ENCODE measurements at regions of chr7 and their contacts with region 1.

Region 1: GRCh38 chr7:5450549-5451372 is 27.1 kb upstream of the TNRC18 start:
- DNase-seq: peak; percentile 71 to 86 (median 85)
- H3K4me3 ChIP-seq: peak overlapping the region in 2 of 7 experiments; percentile 28 to 37
- H3K27ac ChIP-seq: peak overlapping the region in 1 of 2 experiments; percentile 34
- H3K4me1 ChIP-seq: peaks cover 0 to 60% (median 45%) of the 10 kb centered on the region in 4 experiments
- H3K27me3 ChIP-seq: no peaks in the 10 kb centered on the region

Region 2: GRCh38 chr7:5363729-5364128 is 87.0 kb before region 1 on chr7:
- CTCF ChIA-PET with region 1: interaction called, 36 read pairs
- POLR2A ChIA-PET with region 1: interaction called, 4 read pairs
- DNase-seq: no peak
- H3K4me3 ChIP-seq: peak overlapping the region in 1 of 7 experiments; percentile 11
- H3K27ac ChIP-seq: peak overlapping the region in 1 of 2 experiments; percentile 34
- H3K4me1 ChIP-seq: peaks cover 0 to 27% (median 22%) of the 10 kb centered on the region in 4 experiments
- H3K27me3 ChIP-seq: no peaks in the 10 kb centered on the region

Region 3: DNA sequence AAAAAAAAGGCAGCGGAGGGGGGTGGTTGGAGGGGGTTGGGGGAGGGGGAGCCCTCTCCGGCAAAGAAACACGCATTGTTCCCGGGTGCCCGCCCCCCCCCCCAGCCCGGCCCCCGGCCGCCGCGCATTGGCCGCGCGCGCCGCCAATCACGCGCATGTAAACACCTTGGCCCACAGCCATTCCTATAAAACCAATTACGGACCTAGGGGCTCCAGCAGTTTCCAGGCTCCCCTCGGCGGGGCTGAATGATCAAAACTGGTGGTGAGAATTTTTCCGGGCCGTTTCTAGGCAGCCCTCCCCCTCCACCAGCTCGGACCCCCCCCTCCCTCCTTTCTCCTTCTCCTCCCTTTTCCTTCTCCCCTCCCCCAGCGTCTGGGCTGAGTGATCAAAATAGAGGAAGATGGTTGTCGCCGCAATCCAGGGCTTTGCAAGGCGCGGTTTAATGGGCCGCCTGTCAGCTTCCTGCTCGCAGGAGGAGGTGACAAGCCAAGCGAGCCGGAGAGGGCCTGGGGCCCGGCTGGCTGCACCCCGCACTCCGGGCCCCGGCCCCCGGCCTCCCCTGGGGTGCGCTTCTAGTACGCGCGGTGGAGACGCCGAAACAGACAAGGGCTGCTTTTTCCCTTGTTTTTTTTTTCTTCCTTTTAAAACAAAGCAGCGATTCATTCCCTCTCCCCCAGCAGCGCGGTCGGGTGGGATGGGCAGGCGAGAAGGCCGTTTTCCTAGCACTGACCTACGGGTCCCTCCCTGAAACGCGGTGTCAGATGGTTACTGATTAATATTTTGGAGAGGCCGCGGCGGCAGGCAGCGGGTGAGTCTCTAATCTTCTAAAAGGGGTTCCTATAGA is 26.7 kb before region 1 on chr7:
- CTCF ChIA-PET with region 1: interaction called, 16 read pairs
- POLR2A ChIA-PET with region 1: interaction called, 8 read pairs
- DNase-seq: peak; percentile 99 to 100 (median 99)
- H3K4me3 ChIP-seq: peak overlapping the region; percentile 91 to 100 (median 95)
- H3K27ac ChIP-seq: peak overlapping the region; percentile 91 to 98
- H3K4me1 ChIP-seq: peaks cover 0 to 25% (median 16%) of the 10 kb centered on the region in 4 experiments
- H3K27me3 ChIP-seq: no peaks in the 10 kb centered on the region

Region 4: DNA sequence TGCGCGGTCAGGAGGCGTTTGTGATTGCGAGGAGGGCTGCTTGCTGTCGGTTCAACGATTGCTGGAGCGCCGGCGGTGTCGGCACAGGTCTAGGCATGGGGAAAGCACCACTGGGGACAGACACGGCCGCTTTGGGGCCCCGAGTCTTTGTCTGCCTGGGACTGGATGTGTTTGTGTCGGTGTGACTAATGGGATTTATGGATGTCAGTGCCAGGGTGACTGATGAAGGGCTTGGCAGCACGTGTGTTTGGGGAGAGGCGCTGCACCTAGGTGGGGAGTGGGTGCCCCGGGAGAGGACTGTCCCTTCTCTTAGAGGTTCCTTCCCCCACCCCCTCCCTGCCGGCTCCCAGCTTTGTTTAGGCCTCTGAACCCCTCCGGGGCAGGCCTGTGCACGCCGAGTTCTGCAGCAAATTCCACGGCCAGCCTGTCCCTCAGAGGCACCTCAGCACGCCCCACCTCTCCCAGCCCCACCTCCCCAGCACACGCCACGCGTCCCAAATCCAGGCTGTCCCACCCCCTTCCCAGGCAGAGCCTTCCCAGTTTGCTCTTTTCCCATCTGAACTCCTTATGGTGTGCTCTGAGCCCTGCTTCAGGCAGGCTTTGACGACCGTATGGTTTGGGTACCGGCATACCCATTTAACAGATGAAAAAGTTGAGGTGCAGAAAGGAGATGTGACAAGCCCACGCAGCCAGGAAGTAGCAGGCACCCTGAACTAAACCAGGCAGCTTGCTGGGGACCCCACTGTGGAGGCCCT is 20.7 kb before region 1 on chr7:
- CTCF ChIA-PET with region 1: interaction called, 16 read pairs
- POLR2A ChIA-PET with region 1: interaction called, 7 read pairs
- DNase-seq: peak in 2 of 3 donors; percentile 73 to 80
- H3K4me3 ChIP-seq: peak overlapping the region; percentile 69 to 100 (median 93)
- H3K27ac ChIP-seq: peak overlapping the region; percentile 77 to 97
- H3K4me1 ChIP-seq: peaks cover 0 to 45% (median 39%) of the 10 kb centered on the region in 4 experiments
- H3K27me3 ChIP-seq: no peaks in the 10 kb centered on the region